HepG2 (cell line): ENCODE measurements at regions of chr2 and their contacts with region 1.

Region 1: DNA sequence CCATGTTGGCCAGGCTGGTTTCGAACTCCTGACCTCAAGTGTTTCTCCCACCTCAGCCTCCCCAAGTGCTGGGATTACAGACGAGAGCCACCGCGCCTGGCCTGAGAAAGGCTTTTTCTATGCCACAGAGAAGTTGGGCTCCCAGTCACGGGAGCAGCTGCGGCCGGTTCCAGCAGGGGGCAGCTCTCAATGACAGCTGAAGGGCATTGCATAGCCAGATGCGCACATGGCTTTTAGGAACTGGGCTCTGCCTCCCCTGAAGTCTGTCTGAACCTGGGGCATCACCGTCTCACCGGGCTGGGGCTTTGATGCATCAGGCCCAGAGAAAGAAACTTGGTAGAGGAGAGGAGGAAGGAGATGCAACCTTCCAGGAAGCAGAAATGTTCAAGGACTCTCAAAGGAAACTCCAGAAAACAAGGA is 84.2 kb upstream of the LAPTM4A start:
- DNase-seq: peak; percentile 74
- ATAC-seq: peak; percentile 83
- H3K4me3 ChIP-seq: no peak overlapping the region
- H3K27ac ChIP-seq: no peak overlapping the region
- H3K4me1 ChIP-seq: peaks cover 61% of the 10 kb centered on the region
- H3K27me3 ChIP-seq: peaks cover 3 to 63% of the 10 kb centered on the region in 2 experiments; a peak in 4 of 5 replicates
- CTCF ChIP-seq: peak; percentile 99
- EP300 ChIP-seq: no peak
- POLR2A ChIP-seq: no peak
- RAD21 ChIP-seq: peak; percentile 94

Region 2: GRCh38 chr2:20103514-20104112 is 32.0 kb before region 1 on chr2:
- CTCF ChIA-PET with region 1: no interaction called
- POLR2A ChIA-PET with region 1: no interaction called
- in situ Hi-C with region 1: no loop called
- intact Hi-C with region 1: loop called (anchors 2 kb)
- DNase-seq: peak; percentile 65
- ATAC-seq: peak; percentile 65
- H3K4me3 ChIP-seq: no peak overlapping the region
- H3K27ac ChIP-seq: no peak overlapping the region
- H3K4me1 ChIP-seq: peaks cover 46% of the 10 kb centered on the region
- H3K27me3 ChIP-seq: no peaks in the 10 kb centered on the region
- CTCF ChIP-seq: peak; percentile 75
- EP300 ChIP-seq: no peak
- POLR2A ChIP-seq: no peak
- RAD21 ChIP-seq: peak; percentile 74

Region 3: DNA sequence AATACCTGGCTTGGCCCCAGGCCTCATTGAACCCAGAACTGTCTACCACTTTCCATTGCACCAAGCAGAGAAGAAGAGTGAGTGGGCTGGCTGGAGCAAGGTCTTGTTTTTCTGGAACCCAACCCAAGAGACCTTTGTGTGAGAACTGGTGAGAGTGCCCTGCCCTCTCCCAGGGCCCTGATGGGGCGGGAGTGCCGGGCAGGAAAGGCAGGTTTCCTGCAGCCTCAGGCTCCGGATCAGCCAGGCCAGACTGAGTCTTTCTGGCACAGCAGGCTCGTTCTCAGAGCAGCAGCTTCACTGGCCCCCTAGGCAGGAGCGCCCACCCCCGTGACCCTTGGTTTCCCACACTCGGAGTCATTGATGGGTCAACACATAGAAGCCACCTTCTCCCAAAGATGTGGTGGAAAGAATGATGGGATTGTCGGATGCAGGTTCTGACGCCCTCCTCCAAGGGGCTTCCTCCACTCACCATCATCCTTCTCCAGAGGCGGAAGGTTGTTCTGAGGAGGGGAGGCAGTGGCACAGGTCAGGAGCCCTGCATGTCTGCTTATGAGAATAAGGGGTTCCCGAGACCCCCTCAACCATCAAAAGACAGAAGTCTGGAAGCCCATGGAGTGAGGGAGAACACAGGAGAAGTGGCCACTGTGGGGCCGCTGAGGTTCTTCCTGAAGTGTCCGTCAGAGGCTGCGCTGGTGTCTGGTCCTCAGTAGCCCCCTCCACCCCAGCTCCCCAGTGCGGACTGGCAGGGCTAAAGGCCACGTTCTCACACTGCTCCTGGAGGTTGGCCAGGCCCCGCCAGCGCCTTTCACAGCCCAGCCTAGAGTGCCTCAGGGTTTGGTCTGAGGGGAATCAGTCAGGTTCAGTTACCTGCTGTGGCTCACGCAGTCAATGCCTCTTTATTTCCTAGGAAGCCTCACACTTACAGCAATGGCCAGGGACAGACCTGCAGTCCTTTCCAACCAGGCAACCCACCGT is 21.4 kb before region 1 on chr2:
- CTCF ChIA-PET with region 1: no interaction called
- POLR2A ChIA-PET with region 1: no interaction called
- in situ Hi-C with region 1: no loop called
- intact Hi-C with region 1: no loop called
- DNase-seq: no peak
- ATAC-seq: peak; percentile 37
- H3K4me3 ChIP-seq: peak overlapping the region in 1 of 3 experiments; percentile 12; a peak in 1 of 6 replicates
- H3K27ac ChIP-seq: no peak overlapping the region
- H3K4me1 ChIP-seq: peaks cover 77% of the 10 kb centered on the region
- H3K27me3 ChIP-seq: peaks cover 0 to 8% of the 10 kb centered on the region in 2 experiments; a peak in 2 of 5 replicates
- CTCF ChIP-seq: no peak
- EP300 ChIP-seq: no peak
- POLR2A ChIP-seq: no peak
- RAD21 ChIP-seq: no peak

Region 4: DNA sequence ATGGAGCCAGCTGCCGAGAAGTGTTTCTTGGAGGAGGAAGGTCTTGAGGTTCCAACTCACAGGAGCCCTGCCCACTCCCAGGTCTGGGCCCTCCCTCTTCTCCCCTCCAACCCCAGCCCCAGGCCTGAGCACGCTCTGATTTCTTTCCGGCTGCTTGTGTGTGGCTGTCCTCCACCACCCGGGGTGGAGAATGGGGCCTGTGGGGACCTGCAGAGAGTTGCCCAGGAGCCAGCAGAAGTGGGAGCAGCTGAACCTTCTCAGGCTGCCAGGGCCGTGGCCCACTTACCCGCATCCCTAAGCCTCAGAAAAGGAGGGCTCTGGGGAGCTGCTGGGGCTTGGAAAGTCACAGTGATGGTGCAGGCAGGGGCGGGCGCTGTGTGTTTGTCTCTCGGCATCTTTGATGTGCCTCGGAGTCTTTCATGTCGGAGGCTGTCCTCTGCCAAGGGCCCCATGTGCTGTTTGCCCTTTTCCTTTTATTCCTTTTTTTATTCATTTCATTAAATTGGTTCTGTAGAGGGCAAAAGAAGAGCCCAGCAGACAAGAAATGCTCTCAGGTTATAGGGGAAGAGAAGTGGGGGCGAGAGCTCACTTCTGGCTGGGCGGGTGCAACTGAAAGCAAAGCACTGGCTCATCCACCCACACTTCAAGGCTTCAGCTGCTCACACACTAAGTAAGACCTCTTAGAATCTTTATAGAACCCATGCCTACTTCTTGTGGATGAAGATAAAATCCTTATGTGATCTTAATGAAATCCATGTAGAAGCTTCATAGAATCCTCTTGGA is 36.8 kb after region 1 on chr2:
- CTCF ChIA-PET with region 1: no interaction called
- POLR2A ChIA-PET with region 1: interaction called, 3 read pairs
- in situ Hi-C with region 1: loop called (anchors 5 kb)
- intact Hi-C with region 1: loop called (anchors 5 kb)
- DNase-seq: peak; percentile 80
- ATAC-seq: peak; percentile 74
- H3K4me3 ChIP-seq: peak overlapping the region in 2 of 3 experiments; percentile 12 to 61; a peak in 2 of 6 replicates
- H3K27ac ChIP-seq: peak overlapping the region; percentile 47
- H3K4me1 ChIP-seq: peaks cover 53% of the 10 kb centered on the region
- H3K27me3 ChIP-seq: no peaks in the 10 kb centered on the region
- CTCF ChIP-seq: no peak
- EP300 ChIP-seq: peak in 1 of 2 experiments; percentile 69; a peak in 2 of 4 replicates
- POLR2A ChIP-seq: no peak
- RAD21 ChIP-seq: no peak

Region 5: DNA sequence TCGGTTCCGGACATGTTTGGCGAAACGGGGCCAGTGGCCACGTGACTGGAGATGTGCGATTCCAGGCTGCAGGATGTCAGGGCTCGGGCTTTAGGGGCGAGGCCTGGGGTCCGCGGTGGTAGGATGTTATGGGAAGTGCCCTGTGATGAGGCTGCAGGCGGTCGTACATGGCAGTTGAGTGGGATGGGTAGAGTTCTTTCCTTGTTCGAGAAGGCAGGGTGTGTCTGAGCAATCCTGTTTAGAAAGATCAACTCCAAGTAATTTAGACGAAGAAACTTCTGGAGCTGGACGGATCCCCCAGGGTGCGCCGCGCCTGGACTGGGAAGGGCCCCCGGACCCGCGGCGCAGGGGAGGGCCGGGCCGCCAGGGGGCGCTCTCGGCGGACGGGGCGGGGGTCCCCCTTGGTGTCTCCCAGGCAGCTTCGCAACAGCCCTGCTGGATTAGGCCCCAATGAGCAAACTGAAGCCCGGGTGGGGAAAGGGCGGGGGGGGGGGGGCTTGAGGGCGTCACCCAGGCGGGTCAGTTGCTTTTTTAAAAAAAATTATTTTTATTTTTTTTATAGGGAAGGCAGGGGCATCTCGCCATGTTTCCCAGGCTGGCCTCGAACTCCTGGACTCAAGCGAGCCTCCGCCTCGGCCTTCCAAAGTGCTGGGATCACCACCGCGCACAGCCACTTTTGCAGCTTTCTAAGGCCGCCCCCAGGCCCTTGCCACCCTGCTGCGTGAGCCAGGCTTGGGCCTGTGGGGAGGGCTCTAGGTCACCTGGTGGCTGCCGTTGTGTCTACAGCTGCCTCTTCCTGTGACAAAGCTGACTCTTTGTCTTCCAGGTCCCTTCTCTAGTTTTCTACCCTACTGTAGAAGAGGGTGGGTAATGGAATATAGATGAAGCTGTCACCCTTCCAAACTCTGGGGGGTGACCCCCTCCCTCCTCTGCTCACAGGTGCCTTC is 106.7 kb after region 1 on chr2:
- CTCF ChIA-PET with region 1: interaction called, 11 read pairs
- POLR2A ChIA-PET with region 1: interaction called, 3 read pairs
- in situ Hi-C with region 1: no loop called
- intact Hi-C with region 1: no loop called
- DNase-seq: peak; percentile 54
- ATAC-seq: peak; percentile 87
- H3K4me3 ChIP-seq: peak overlapping the region in 1 of 3 experiments; percentile 11; a peak in 1 of 6 replicates
- H3K27ac ChIP-seq: no peak overlapping the region
- H3K4me1 ChIP-seq: peaks cover 18% of the 10 kb centered on the region
- H3K27me3 ChIP-seq: no peaks in the 10 kb centered on the region; a peak in 1 of 5 replicates
- CTCF ChIP-seq: peak; percentile 48; the same call in 1 of the 2 replicates
- EP300 ChIP-seq: no peak
- POLR2A ChIP-seq: no peak
- RAD21 ChIP-seq: peak; percentile 40; the same call in 1 of the 2 replicates

Region 6: GRCh38 chr2:20291106-20291564 is 155.5 kb after region 1 on chr2:
- CTCF ChIA-PET with region 1: no interaction called
- POLR2A ChIA-PET with region 1: no interaction called
- in situ Hi-C with region 1: no loop called
- intact Hi-C with region 1: loop called (anchors 1 kb)
- DNase-seq: peak; percentile 89
- ATAC-seq: peak; percentile 100
- H3K4me3 ChIP-seq: no peak overlapping the region
- H3K27ac ChIP-seq: peak overlapping the region; percentile 13
- H3K4me1 ChIP-seq: peaks cover 5% of the 10 kb centered on the region; the same call in 1 of the 2 replicates
- H3K27me3 ChIP-seq: no peaks in the 10 kb centered on the region
- CTCF ChIP-seq: peak; percentile 89
- EP300 ChIP-seq: no peak
- POLR2A ChIP-seq: no peak
- RAD21 ChIP-seq: peak; percentile 73

Region 7: DNA sequence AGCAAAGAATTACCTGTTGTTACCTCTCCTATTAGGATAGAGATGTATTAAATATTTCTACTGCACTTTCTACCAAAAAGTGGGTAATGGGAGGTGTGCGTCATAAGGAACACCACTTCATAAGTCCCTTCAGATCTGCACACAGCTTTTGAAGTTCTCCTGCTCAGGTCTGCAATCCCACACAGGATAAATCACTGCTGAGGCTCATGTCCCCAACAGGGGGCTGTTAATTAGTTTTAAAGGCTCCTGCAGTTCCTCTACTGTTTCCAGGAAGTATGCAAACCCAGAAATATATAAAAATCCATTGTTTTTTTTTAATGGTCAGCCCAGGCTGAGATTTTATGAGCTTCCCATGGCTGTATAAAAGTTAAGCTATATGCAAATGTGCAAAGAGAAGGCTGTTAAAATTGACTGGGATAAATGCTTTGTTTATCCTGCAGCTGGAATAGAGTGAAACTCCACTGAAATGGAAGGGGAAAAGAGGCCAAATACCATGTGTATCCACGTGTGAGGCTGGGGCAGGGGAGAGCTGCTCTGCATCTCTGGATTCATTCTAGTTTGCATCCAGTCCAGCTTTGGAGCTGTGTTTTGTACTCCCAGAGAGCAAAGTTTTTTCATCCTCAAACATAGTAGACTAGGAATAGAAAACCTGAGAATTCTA is 1891.8 kb after region 1 on chr2:
- CTCF ChIA-PET with region 1: no interaction called
- POLR2A ChIA-PET with region 1: no interaction called
- in situ Hi-C with region 1: no loop called
- intact Hi-C with region 1: no loop called
- DNase-seq: no peak
- ATAC-seq: no peak
- H3K4me3 ChIP-seq: no peak overlapping the region
- H3K27ac ChIP-seq: no peak overlapping the region
- H3K4me1 ChIP-seq: no peaks in the 10 kb centered on the region
- H3K27me3 ChIP-seq: no peaks in the 10 kb centered on the region
- CTCF ChIP-seq: no peak
- EP300 ChIP-seq: no peak
- POLR2A ChIP-seq: no peak
- RAD21 ChIP-seq: no peak